ENCODE measurements at regions of chr21 and their contacts with region 1.

Region 1: GRCh38 chr21:46323227-46324128 is at the start of gene C21orf58:
- DNase-seq: peak; percentile 97
- H3K4me3 ChIP-seq: peak within 1 kb of the TSS; percentile 84 to 96 (median 94)
- H3K27ac ChIP-seq: peak within 1 kb of the TSS; percentile 91
- H3K4me1 ChIP-seq: peaks cover 19% of the 10 kb centered on the region
- H3K27me3 ChIP-seq: no peaks in the 10 kb centered on the region
- CTCF ChIP-seq: no peak
- total RNA-seq, gene C21orf58: 1.8 to 13.8 TPM

Region 2: DNA sequence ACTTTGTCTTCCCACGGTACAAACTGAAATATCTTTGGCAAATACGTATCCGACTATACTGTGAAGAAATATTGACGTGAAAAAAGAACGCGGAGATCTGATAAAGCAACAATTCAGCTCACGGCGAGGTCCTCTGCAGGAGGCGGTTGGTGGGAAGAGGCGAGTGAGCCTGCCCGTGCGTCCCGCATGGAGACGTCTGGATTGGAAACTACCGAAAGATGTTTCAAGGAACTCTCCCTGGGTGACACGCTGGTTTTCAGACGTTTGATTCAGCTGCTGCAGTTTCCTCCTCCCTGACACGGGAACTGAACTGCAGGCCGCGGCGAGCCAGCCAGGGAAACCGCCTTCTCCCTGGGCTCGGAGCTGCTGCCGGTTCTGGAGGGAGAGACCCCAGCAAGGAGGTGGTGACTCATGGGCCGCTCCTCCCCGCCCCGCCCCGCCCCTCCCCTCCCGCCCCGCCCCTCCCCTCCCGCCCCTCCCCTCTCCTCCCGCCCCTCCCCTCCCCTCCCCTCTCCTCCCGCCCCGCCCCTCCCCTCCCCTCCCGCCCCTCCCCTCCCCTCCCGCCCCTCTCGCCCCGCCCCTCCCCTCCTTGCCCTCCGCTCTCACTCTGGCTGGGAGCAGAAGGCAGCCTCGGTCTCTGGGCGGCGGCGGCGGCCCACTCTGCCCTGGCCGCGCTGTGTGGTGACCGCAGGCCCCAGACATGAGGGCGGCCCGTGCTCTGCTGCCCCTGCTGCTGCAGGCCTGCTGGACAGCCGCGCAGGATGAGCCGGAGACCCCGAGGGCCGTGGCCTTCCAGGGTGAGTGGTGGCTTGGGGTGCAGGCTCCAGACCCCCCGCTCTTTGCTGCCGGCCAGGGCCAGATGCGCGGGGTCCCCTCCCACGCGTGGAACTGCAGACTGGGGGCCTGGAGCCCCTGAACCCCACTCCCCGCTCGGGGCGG is 342.1 kb before region 1 on chr21 and contains the start of gene COL6A1:
- CTCF ChIA-PET with region 1: no interaction called
- dilution Hi-C with region 1: no loop called
- in situ Hi-C with region 1: no loop called
- intact Hi-C with region 1: loop called (anchors 5 kb)
- DNase-seq: peak; percentile 70
- H3K4me3 ChIP-seq: peak within 1 kb of the TSS; percentile 49 to 62 (median 54)
- H3K27ac ChIP-seq: no peak within 1 kb of the TSS
- H3K4me1 ChIP-seq: peaks cover 10% of the 10 kb centered on the region
- H3K27me3 ChIP-seq: peaks cover 10% of the 10 kb centered on the region
- CTCF ChIP-seq: no peak
- total RNA-seq, gene COL6A1: 9.1 to 156 TPM

Region 3: GRCh38 chr21:46210378-46211136 is 112.9 kb before region 1 on chr21:
- CTCF ChIA-PET with region 1: no interaction called
- dilution Hi-C with region 1: no loop called
- in situ Hi-C with region 1: no loop called
- intact Hi-C with region 1: no loop called
- DNase-seq: no peak
- H3K4me3 ChIP-seq: no peak overlapping the region
- H3K27ac ChIP-seq: no peak overlapping the region
- H3K4me1 ChIP-seq: peaks cover 6% of the 10 kb centered on the region
- H3K27me3 ChIP-seq: no peaks in the 10 kb centered on the region
- CTCF ChIP-seq: no peak

Region 4: DNA sequence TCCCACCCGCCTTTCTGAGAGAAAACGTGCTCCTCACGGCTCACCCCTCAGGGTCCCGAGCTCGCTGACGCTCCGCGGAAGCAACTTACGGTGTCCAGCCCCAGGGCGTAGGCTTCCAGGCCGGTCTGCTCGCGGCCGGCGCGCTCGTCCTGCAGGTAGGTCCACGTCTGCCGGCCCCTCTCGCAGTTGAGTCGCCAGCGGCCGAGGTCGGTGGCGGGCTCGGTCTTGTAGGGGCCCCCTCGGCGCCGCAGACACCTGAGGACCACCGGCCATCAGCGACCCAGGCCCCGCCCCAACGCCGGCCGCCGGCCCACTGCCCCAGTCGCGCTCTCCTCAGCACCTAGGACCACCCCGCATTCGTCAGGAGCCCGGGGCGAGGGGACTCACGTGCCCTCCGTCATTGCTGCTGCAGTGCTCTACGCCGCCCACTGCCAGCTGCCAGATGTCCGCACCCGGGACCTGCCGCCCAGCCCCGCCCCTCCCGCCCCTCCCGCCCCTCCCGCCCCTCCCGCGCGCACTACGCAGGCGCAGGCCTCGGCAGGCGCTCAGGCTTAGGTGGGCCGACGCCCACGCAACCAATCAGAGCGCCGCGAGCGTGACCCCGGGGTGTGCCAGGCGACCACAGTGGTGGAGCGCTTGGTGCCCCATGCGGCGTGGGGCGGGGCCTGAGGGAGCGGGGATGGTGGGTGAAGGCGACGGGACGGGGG is 95.0 kb before region 1 on chr21 and contains the start of gene LSS:
- CTCF ChIA-PET with region 1: no interaction called
- dilution Hi-C with region 1: no loop called
- in situ Hi-C with region 1: no loop called
- intact Hi-C with region 1: loop called (anchors 5 kb)
- DNase-seq: peak; percentile 96
- H3K4me3 ChIP-seq: peak within 1 kb of the TSS; percentile 93 to 94 (median 94)
- H3K27ac ChIP-seq: peak within 1 kb of the TSS; percentile 87
- H3K4me1 ChIP-seq: peaks cover 25% of the 10 kb centered on the region
- H3K27me3 ChIP-seq: no peaks in the 10 kb centered on the region
- CTCF ChIP-seq: no peak
- total RNA-seq, gene LSS: 69.2 to 126 TPM

Region 5: DNA sequence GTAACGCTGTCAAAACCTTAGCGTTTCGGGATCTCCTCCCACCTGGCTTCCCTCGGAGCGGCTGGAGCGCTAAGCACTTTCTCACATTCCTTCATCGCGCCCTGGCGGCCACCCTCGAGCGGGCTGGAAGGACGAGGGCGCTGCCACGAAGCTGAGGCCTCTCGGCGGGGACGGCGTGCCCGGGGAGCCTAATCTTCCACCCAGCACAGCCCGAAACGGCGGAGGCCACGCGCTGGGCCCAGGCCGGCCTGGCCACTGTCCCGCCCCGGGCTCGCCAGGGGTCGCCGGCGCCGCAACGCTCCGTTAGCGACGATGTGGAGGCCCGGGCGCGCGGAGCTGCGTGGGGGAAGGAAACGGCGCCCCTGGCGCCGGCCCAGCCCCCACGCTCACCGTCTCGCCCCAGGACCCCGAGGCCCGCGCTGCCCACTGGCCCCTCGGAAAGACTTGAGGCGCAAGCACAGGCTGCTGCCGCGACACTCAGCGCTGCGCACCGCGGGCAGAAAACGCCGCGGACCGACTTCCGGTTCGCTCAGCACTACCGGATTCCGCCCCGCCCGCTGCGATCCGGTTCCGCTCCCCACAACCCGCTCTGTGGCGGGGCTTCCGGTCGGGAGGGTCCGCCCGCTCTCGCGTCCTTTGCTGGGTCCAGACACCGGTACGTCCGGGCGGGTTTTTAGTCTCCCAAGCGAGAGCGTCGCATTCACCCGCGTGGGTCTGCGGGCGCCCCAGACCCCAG is 37.5 kb before region 1 on chr21 and contains the start of gene YBEY:
- CTCF ChIA-PET with region 1: no interaction called
- dilution Hi-C with region 1: no loop called
- in situ Hi-C with region 1: no loop called
- intact Hi-C with region 1: loop called (anchors 1 kb)
- DNase-seq: peak; percentile 91
- H3K4me3 ChIP-seq: peak within 1 kb of the TSS; percentile 73 to 90 (median 76)
- H3K27ac ChIP-seq: peak within 1 kb of the TSS; percentile 70
- H3K4me1 ChIP-seq: peaks cover 25% of the 10 kb centered on the region
- H3K27me3 ChIP-seq: no peaks in the 10 kb centered on the region
- CTCF ChIP-seq: peak; percentile 13 to 48
- total RNA-seq, gene YBEY: 9.0 to 12.3 TPM

Region 6: GRCh38 chr21:46368533-46369285 is 45.2 kb after region 1 on chr21:
- CTCF ChIA-PET with region 1: no interaction called
- dilution Hi-C with region 1: no loop called
- in situ Hi-C with region 1: no loop called
- intact Hi-C with region 1: no loop called
- DNase-seq: no peak
- H3K4me3 ChIP-seq: no peak overlapping the region
- H3K27ac ChIP-seq: no peak overlapping the region
- H3K4me1 ChIP-seq: no peaks in the 10 kb centered on the region
- H3K27me3 ChIP-seq: no peaks in the 10 kb centered on the region
- CTCF ChIP-seq: no peak